ENCODE measurements at regions of chr1 and their contacts with region 1.

Region 1: GRCh38 chr1:155591770-155592169 is 18.2 kb upstream of the MSTO1 start:
- DNase-seq: no peak
- H3K4me3 ChIP-seq: no peak overlapping the region
- CTCF ChIP-seq: no peak
- POLR2A ChIP-seq: no peak

Region 2: GRCh38 chr1:155261852-155262673 is 329.7 kb before region 1 on chr1 and contains the start of gene SCAMP3:
- intact Hi-C with region 1: loop called (anchors 10 kb)
- DNase-seq: peak; percentile 98
- H3K4me3 ChIP-seq: peak within 1 kb of the TSS; percentile 65
- CTCF ChIP-seq: no peak
- POLR2A ChIP-seq: no peak
- total RNA-seq, gene SCAMP3: 67.8 to 96.9 (median 87.6) TPM

Region 3: DNA sequence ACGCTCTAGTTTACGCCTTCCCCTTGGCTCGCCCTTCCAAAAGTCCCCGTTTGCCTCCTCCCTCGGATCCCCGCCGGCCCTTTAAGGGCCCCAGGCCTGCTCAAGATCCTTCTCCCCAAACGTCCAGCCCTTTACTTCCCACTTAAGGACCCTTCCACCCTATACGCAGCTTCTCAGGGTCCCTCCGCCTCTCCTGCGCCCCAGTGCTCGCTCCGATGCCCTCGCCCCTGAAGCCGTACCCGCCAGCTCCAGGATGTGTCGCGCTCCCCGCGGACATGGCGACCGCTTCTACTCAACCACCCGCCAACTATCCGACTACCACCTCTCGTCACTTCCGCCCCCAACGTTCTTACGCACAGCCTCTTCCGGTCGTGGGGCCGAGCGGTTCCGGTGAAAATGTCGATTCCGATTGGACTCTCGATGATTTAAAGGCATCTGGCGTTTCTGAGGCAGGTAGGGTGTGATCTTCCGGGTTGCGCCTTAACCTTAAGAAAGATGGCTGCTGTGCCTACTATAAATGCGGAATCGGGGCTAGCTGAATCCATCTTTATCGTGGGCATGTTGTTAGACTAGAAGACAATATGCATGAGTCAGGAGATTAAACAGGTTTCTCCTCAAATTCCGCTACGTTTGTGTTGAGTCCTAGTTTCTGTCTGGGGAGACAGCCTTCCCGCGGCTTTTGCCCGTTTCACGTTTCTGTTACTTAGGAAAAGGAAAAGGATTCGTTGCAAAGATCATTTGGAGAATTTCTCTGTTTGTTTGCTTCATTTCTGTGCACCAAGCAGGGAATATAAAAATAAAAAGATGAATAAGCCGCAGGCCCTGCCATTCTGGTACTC is 342.5 kb after region 1 on chr1 and contains the start of gene KHDC4:
- intact Hi-C with region 1: no loop called
- DNase-seq: peak; percentile 97 to 99
- H3K4me3 ChIP-seq: peak within 1 kb of the TSS; percentile 69
- CTCF ChIP-seq: no peak
- POLR2A ChIP-seq: peak in 1 of 2 donors; percentile 96
- total RNA-seq, gene KHDC4: 32.7 to 96.0 (median 45.5) TPM

Measured in lower leg skin (tissue), 4 donors.